ENCODE measurements at regions of chr5 and their contacts with region 1.

Region 1: DNA sequence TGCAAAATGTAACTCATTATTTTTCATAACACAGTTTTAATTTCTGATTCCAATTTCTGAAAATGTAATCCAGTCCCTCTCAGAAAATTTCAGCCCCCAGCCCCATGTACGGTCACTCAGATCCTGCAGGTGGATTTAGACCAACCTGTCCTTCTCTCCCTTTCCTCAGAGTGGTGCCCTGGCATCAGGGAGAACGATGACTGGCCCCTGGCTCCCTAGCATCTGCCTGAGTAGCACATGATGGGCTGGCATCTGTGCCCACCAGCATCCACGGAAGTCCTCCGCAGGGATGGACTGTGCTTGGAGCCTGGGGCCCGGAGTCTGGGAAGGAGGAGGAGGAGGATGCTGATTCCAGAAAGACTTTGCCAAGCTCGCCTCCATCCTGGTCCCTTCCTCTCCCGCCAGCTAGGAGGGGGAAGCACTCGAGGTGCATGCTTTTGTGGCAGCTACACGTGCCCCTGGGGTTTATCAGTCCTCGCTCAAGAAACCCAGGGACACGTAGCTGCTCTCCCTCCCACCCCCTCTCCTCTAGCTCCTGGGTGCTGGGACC is 54.4 kb upstream of the RUFY1 start:
- DNase-seq: no peak
- ATAC-seq: peak; percentile 54; the same call in 2 of the 3 replicates
- H3K4me3 ChIP-seq: no peak overlapping the region
- H3K27ac ChIP-seq: no peak overlapping the region
- H3K4me1 ChIP-seq: no peaks in the 10 kb centered on the region
- H3K27me3 ChIP-seq: no peaks in the 10 kb centered on the region
- CTCF ChIP-seq: peak in 1 of 3 experiments; percentile 43; a peak in 2 of 6 replicates
- EP300 ChIP-seq: no peak
- POLR2A ChIP-seq: no peak
- RAD21 ChIP-seq: peak; percentile 57

Region 2: DNA sequence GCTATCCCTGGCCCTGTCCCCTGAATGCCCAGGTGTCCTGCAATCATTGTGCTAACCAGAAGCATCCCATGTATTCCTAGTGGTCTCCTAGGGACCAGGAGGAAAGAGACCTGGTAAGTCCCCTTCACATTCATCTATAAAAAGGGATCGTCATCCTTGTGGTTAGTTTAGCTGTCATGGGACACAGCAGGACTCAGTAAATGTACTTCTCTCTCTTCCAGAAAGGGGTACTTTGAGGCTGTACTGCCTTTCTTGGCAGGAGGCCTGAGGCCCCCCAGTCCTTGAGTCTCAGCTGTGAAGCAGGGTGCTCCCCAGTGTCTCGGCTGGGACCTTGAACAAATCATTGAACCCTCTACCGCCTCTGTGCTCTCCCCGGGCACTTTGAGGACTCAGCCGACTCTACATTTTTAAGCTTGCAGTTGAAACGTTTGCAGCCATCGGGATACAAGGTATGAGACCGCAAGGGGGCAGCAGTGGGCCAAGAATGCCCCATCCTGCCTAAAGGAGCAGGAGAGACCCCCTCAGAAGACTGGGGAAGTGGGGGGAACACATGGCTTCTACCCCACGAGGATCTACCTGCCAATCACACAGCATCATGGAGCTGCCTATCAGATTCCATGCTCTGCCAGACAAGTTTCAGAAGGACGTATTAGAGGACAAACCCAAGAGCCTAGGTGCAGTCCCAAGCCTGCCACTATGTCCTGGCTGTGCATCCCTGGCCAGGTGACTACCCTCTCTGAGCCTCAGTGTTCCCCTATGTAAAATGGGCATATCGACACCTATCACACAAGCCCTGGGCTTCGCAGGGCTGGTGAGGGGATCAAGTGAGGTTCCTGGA is 1261.0 kb before region 1 on chr5:
- CTCF ChIA-PET with region 1: interaction called, 3 read pairs
- POLR2A ChIA-PET with region 1: no interaction called
- RAD21 ChIA-PET with region 1: no interaction called
- SMC1A ChIA-PET with region 1: no interaction called
- in situ Hi-C with region 1: no loop called
- intact Hi-C with region 1: loop called (anchors 5 kb)
- DNase-seq: no peak
- ATAC-seq: peak; percentile 40
- H3K4me3 ChIP-seq: no peak overlapping the region
- H3K27ac ChIP-seq: no peak overlapping the region
- H3K4me1 ChIP-seq: peaks cover 48% of the 10 kb centered on the region
- H3K27me3 ChIP-seq: no peaks in the 10 kb centered on the region
- CTCF ChIP-seq: peak; percentile 78 to 85 (median 81)
- EP300 ChIP-seq: no peak
- POLR2A ChIP-seq: no peak
- RAD21 ChIP-seq: peak; percentile 76

Region 3: GRCh38 chr5:178732281-178732680 is 763.7 kb before region 1 on chr5:
- CTCF ChIA-PET with region 1: interaction called, 4 read pairs
- POLR2A ChIA-PET with region 1: no interaction called
- RAD21 ChIA-PET with region 1: no interaction called
- SMC1A ChIA-PET with region 1: no interaction called
- in situ Hi-C with region 1: no loop called
- intact Hi-C with region 1: loop called (anchors 2 kb)
- DNase-seq: no peak
- ATAC-seq: no peak
- H3K4me3 ChIP-seq: no peak overlapping the region
- H3K27ac ChIP-seq: no peak overlapping the region
- H3K4me1 ChIP-seq: no peaks in the 10 kb centered on the region
- H3K27me3 ChIP-seq: no peaks in the 10 kb centered on the region
- CTCF ChIP-seq: no peak
- EP300 ChIP-seq: no peak
- POLR2A ChIP-seq: no peak
- RAD21 ChIP-seq: no peak

Region 4: GRCh38 chr5:179166886-179167841 is 328.8 kb before region 1 on chr5:
- CTCF ChIA-PET with region 1: interaction called, 10 read pairs
- POLR2A ChIA-PET with region 1: no interaction called
- RAD21 ChIA-PET with region 1: interaction called, 4 read pairs
- SMC1A ChIA-PET with region 1: interaction called, 5 read pairs
- in situ Hi-C with region 1: no loop called
- intact Hi-C with region 1: loop called (anchors 5 kb)
- DNase-seq: no peak
- ATAC-seq: peak; percentile 72
- H3K4me3 ChIP-seq: no peak overlapping the region
- H3K27ac ChIP-seq: no peak overlapping the region
- H3K4me1 ChIP-seq: no peaks in the 10 kb centered on the region
- H3K27me3 ChIP-seq: no peaks in the 10 kb centered on the region
- CTCF ChIP-seq: peak in 2 of 3 experiments; percentile 35 to 46; a peak in 4 of 6 replicates
- EP300 ChIP-seq: no peak
- POLR2A ChIP-seq: no peak
- RAD21 ChIP-seq: peak; percentile 49

Region 5: DNA sequence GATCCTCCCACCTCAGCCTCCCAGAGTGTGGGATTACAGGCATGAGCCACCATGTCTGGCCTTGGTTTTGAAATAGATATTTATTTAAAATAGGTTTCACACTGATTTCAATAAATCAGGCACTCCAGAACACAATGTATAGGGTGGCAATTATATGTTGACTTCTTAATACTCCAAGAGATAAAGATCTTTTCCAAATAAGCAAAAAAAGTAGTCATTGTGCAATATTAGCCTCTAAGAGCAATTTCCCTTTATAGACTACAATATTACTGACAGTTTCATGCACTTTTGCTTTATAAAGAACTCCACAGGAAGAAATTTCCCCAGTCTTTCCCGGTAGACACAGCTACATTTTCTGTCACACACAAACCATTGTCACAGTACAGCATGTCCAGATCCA is 31.0 kb after region 1 on chr5:
- CTCF ChIA-PET with region 1: no interaction called
- POLR2A ChIA-PET with region 1: no interaction called
- RAD21 ChIA-PET with region 1: no interaction called
- SMC1A ChIA-PET with region 1: no interaction called
- in situ Hi-C with region 1: no loop called
- intact Hi-C with region 1: no loop called
- DNase-seq: no peak
- ATAC-seq: no peak
- H3K4me3 ChIP-seq: no peak overlapping the region
- H3K27ac ChIP-seq: no peak overlapping the region
- H3K4me1 ChIP-seq: no peaks in the 10 kb centered on the region
- H3K27me3 ChIP-seq: 0 out of 4 replicates have a peak, but pooled peaks cover 0 to 2% of the 10 kb centered on the region in 2 experiments
- CTCF ChIP-seq: no peak
- EP300 ChIP-seq: no peak
- POLR2A ChIP-seq: no peak
- RAD21 ChIP-seq: no peak

Region 6: DNA sequence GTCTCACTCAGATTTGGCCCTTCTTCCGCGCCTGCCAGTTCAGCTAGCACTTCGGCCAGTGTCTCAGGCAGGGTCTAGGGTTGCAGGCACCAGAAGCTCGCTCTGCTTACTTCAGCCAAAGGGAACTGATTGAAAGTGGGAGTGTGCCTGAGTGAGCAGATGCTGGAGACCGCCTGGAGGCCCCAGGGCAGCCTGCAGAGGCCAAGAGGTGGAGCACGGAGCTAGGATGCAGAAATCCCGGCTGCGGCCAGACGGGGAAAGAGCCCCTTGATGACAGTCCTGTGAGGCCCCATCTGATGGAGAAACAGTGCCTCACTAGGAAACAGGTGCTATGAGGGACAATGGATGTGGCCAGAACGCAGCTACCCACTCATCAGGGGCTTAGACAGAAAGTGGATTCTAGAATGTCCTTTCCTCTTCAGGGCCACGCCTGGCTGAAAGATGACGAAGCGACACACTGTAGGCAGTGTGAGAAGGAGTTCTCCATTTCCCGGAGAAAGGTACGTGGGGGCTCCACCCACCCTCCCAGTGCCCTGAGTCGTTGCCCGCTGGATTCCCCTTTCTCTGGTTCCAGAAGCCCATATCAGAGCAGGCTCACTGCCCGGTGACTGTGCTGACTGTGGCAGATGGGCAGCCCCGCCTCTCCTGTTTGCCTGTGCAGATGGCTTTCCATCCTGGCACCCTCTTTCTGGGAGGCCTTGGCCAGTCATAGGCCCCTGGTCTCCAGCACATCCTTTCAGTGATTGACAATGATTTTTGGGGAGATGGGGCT is 111.4 kb after region 1 on chr5:
- CTCF ChIA-PET with region 1: no interaction called
- POLR2A ChIA-PET with region 1: no interaction called
- RAD21 ChIA-PET with region 1: no interaction called
- SMC1A ChIA-PET with region 1: no interaction called
- in situ Hi-C with region 1: no loop called
- intact Hi-C with region 1: no loop called
- DNase-seq: no peak
- ATAC-seq: peak; percentile 9; the same call in 2 of the 3 replicates
- H3K4me3 ChIP-seq: no peak overlapping the region
- H3K27ac ChIP-seq: no peak overlapping the region
- H3K4me1 ChIP-seq: no peaks in the 10 kb centered on the region
- H3K27me3 ChIP-seq: no peaks in the 10 kb centered on the region
- CTCF ChIP-seq: no peak
- EP300 ChIP-seq: no peak
- POLR2A ChIP-seq: peak; percentile 68
- RAD21 ChIP-seq: no peak

Region 7: GRCh38 chr5:179732417-179732917 is 236.5 kb after region 1 on chr5 and contains the start of gene MAML1:
- CTCF ChIA-PET with region 1: no interaction called
- POLR2A ChIA-PET with region 1: no interaction called
- RAD21 ChIA-PET with region 1: no interaction called
- SMC1A ChIA-PET with region 1: no interaction called
- in situ Hi-C with region 1: no loop called
- intact Hi-C with region 1: no loop called
- DNase-seq: peak; percentile 98
- ATAC-seq: peak; percentile 97
- H3K4me3 ChIP-seq: peak within 1 kb of the TSS; percentile 84
- H3K27ac ChIP-seq: peak within 1 kb of the TSS; percentile 83
- H3K4me1 ChIP-seq: peaks cover 6% of the 10 kb centered on the region; the same call in 1 of the 2 replicates
- H3K27me3 ChIP-seq: no peaks in the 10 kb centered on the region
- CTCF ChIP-seq: no peak
- EP300 ChIP-seq: no peak
- POLR2A ChIP-seq: peak; percentile 83
- RAD21 ChIP-seq: no peak
- polyA plus RNA-seq, gene MAML1: 0.42 to 1.2 TPM

Measured in GM12878 (cell line).